Right ventricle myocardium superior (tissue), 1 donor: ENCODE measurements at regions of chr1 and their contacts with region 1.

Region 1: DNA sequence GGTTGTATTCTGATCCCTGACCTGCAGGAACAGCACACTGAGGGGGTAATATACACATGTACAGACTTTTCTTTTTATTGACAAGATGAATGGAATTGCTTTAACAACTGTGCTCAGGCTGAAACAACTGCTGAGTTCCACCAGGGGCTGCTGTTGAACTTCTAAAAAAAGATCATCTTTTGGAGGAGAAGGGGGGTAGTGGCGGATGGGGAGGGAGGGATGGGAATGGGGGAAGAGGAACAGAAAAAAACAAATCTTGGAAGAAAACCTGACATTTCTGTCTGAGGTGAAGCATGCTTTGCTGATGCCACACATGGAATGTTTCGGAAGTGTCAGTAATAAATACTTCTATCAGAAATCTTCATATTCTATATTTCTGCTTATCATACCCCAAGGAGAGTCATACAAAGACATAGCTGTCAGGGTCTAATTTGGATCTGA is 75.0 kb downstream of the RWDD3 start:
- DNase-seq: no peak
- ATAC-seq: peak; percentile 73

Region 2: GRCh38 chr1:95072532-95073419 is 236.3 kb before region 1 on chr1 and contains the start of gene ALG14:
- intact Hi-C with region 1: no loop called
- DNase-seq: peak; percentile 96
- ATAC-seq: peak; percentile 98
- total RNA-seq, gene ALG14: 2.9 TPM

Region 3: DNA sequence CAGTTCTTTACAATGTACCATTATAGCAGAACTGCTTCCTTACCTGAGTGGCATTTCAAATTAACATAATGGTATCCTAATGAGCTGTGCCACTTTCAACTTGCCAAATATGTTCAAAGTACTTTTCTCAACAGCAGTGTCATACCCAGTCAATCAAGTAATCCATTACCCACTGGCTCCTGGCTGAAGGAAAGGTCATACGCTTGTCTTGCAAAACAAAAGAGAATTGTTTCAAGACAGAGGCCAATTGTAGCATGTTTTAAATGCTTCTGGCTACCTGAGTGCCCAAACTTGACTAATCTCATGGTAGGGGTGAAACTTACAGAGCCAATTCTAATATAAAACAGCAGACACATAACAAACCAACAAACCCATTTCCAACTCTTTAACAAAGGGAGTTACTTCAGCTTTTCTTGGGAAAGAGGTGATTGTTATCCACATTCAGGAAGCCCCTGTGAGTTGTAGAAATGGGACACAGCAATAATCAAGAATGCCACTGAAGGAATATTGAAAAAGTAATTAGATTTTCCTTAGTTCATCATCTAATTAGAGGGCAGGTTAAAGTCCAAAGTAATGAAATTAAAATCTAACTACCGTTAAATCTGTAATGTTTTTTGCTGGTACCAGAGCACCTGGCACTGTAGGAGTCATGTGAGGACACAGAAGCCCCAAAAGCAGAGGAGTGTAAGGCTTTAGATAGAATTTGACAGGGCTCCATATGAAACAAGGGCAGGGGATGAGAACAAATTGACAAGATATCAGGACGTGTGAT is 166.8 kb after region 1 on chr1:
- intact Hi-C with region 1: loop called (anchors 10 kb)
- DNase-seq: no peak
- ATAC-seq: no peak